CD14-positive monocyte (primary cell): ENCODE measurements at regions of chr2 and their contacts with region 1.

Region 1: GRCh38 chr2:118221666-118222594 is 133.7 kb downstream of the INSIG2 start:
- DNase-seq: peak; percentile 24 to 55 (median 50)
- H3K4me3 ChIP-seq: no peak overlapping the region
- H3K4me3 Mint-ChIP-seq: peak overlapping the region in 1 of 2 donors; percentile 65
- H3K27ac ChIP-seq: no peak overlapping the region
- H3K27ac Mint-ChIP-seq: peak overlapping the region in 1 of 7 donors; percentile 35
- H3K4me1 ChIP-seq: peaks cover 15 to 16% of the 10 kb centered on the region in 2 donors
- H3K4me1 Mint-ChIP-seq: peaks cover 15% of the 10 kb centered on the region
- H3K27me3 ChIP-seq: peaks cover 77 to 89% of the 10 kb centered on the region in 2 donors
- H3K27me3 Mint-ChIP-seq: peaks cover 74 to 82% (median 82%) of the 10 kb centered on the region in 3 donors
- CTCF ChIP-seq: peak; percentile 79

Region 2: DNA sequence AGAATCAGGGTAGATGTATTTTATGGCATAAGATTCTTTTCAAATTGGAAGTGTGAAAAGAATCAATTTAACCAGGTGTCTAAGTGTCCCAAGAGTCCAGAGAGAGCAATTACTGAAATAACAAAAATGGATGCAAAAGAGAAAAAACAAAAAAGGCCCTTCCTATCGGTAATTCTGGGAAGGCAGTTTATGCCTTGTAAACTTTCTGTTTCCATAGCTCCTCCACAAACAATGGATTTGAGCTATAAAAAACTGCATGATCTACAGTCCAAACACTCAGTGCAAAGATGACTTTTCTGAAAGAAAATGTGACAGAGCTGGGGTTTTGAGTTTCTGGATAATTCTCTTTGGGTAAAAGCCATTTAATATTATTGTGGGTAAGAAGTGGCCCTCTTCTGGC is 259.4 kb after region 1 on chr2:
- intact Hi-C with region 1: no loop called
- DNase-seq: no peak
- H3K4me3 ChIP-seq: no peak overlapping the region
- H3K4me3 Mint-ChIP-seq: no peak overlapping the region
- H3K27ac ChIP-seq: no peak overlapping the region
- H3K27ac Mint-ChIP-seq: no peak overlapping the region
- H3K4me1 ChIP-seq: no peaks in the 10 kb centered on the region
- H3K4me1 Mint-ChIP-seq: no peaks in the 10 kb centered on the region
- H3K27me3 ChIP-seq: no peaks in the 10 kb centered on the region
- H3K27me3 Mint-ChIP-seq: peaks cover 2 to 6% (median 4%) of the 10 kb centered on the region in 3 donors
- CTCF ChIP-seq: no peak

Region 3: DNA sequence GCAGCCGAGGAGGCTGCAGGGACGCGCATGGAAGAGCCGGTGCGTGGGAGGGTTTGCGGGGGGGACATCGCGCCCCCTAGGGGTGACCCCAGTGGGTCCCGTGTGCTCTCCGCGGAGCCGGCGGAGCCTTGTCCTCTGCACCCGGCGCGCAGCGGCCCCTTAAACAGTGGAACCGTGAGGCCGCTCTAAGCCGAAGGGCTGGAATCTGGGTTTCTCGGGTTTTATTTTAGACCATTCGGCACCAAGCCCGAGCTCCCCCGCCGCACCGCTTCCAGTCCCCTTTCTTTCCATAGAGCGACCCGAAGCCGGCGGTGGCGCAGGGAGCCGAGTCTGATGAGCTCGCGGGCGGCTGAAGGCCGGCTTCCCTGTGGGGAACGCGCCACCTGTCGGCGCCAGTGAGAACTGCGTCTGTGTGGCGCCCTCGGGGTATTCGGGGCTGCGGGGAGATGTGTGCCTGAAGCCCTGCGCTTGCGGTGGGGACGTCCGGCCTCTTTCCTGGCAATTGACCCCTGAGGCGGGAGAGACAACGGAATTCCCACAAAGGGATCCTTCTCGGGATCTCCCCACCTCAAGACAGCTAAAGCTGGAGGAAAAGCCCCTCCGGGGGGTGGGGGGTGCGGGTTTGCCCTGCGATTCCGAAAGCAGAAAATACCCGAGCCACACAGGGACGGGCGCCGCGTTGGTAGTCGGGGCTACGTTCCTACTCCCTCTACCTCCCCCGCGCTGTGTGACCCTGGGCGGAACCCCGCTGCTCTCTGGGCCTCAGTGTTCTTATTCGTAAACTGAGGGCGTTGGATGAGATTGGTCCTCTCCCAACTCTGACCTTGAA is 633.7 kb after region 1 on chr2:
- intact Hi-C with region 1: loop called (anchors 5 kb)
- DNase-seq: peak; percentile 56 to 67 (median 58)
- H3K4me3 ChIP-seq: peak overlapping the region in 2 of 3 experiments; percentile 0 to 42
- H3K4me3 Mint-ChIP-seq: peak overlapping the region; percentile 71 to 89
- H3K27ac ChIP-seq: no peak overlapping the region
- H3K27ac Mint-ChIP-seq: no peak overlapping the region
- H3K4me1 ChIP-seq: peaks cover 11% of the 10 kb centered on the region in 2 donors
- H3K4me1 Mint-ChIP-seq: peaks cover 23% of the 10 kb centered on the region
- H3K27me3 ChIP-seq: peaks cover 86 to 100% of the 10 kb centered on the region in 2 donors
- H3K27me3 Mint-ChIP-seq: peaks cover 97 to 100% (median 100%) of the 10 kb centered on the region in 3 donors
- CTCF ChIP-seq: peak; percentile 97

Region 4: GRCh38 chr2:119290859-119291587 is 1069.1 kb after region 1 on chr2:
- intact Hi-C with region 1: loop called in 1 of 2 experiments (anchors 10 kb)
- DNase-seq: peak in 2 of 3 donors; percentile 56 to 68
- H3K4me3 ChIP-seq: no peak overlapping the region
- H3K4me3 Mint-ChIP-seq: no peak overlapping the region
- H3K27ac ChIP-seq: no peak overlapping the region
- H3K27ac Mint-ChIP-seq: no peak overlapping the region
- H3K4me1 ChIP-seq: no peaks in the 10 kb centered on the region
- H3K4me1 Mint-ChIP-seq: peaks cover 3% of the 10 kb centered on the region
- H3K27me3 ChIP-seq: no peaks in the 10 kb centered on the region
- H3K27me3 Mint-ChIP-seq: peaks cover 0 to 4% (median 1%) of the 10 kb centered on the region in 3 donors
- CTCF ChIP-seq: peak; percentile 77